ENCODE measurements at regions of chr5 and their contacts with region 1.

Region 1: GRCh38 chr5:78964887-78965286 is 20.2 kb downstream of the ARSB start:
- DNase-seq: no peak

Region 2: GRCh38 chr5:78467752-78468357 is 497.0 kb before region 1 on chr5:
- intact Hi-C with region 1: loop called (anchors 10 kb)
- DNase-seq: no peak

Region 3: DNA sequence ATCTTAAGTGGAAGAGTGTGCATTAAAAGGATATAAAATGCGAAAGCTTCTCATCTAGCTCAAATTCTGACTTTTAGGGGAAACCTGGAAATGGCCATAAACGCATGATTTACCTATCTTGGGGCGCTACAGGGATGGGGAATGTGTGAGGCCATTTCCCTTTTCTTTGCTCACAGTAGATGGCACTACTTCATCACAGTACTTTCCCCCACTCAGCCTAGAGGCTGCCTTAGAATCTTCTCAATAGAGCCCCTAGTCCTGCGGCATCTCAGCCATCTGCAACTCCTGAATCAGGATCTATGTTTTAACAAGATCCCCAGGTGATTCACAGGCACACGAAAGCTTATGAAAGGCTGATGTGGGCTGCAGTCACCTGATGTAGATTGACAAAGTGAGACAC is 427.1 kb before region 1 on chr5:
- intact Hi-C with region 1: loop called (anchors 2 kb)
- DNase-seq: peak in 3 of 10 donors; percentile 31 to 84 (median 34)

Region 4: DNA sequence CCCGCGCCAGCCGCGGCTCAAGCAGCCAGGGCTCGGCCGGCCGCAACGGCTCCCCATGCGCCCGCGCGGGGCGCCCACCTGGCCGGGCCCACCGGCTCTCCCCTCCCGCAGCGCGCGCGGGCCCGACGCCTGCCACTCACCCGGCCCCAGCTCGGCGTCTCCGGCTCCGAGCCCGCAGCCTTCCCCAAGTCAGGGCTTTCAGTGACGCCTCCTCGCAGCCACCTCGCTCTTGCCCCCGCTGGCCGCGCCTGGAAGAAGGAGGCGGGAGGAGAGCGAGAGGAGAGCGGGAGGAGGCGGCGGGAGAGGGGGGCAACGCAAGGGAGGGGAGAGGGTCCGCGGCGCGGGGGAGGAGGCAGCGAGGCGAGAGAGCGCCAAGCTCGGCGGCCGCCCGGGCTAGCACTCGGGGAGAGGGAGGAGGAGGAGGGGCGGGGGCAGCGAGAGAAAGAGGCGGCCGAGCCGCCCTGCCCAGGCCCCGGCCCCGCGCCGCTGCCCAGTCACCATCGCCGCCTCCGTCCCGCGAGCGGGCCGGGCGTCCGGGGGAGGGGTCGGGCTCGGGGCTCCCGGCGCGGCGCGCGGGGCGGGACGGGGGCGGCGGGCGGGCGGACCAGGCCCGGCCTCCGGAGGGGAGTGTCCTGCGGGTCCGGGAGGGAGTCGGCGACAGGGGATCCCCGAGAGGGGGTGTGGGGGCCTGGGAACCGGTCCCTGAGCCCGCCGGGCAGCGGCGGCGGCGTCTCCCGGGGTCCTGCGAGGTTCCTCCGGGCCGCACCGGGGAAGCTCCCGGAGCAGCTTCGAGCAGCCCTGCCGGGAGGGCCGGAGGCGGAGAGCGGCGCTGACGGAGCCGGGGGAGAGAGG is 316.3 kb before region 1 on chr5 and contains the start of gene LHFPL2:
- intact Hi-C with region 1: loop called (anchors 10 kb)
- DNase-seq: peak; percentile 35 to 92 (median 50)

Region 5: GRCh38 chr5:78899922-78900362 is 64.9 kb before region 1 on chr5:
- intact Hi-C with region 1: loop called (anchors 10 kb)
- DNase-seq: peak in 1 of 10 donors; percentile 35

Region 6: GRCh38 chr5:79133657-79134451 is 169.0 kb after region 1 on chr5:
- intact Hi-C with region 1: no loop called
- DNase-seq: peak in 9 of 10 donors; percentile 38 to 90 (median 61)